Activated CD4-positive, alpha-beta memory T cell treated with anti-CD3 and anti-CD28 coated beads for 36 hours (primary cell): ENCODE measurements at regions of chr10 and their contacts with region 1.

Region 1: DNA sequence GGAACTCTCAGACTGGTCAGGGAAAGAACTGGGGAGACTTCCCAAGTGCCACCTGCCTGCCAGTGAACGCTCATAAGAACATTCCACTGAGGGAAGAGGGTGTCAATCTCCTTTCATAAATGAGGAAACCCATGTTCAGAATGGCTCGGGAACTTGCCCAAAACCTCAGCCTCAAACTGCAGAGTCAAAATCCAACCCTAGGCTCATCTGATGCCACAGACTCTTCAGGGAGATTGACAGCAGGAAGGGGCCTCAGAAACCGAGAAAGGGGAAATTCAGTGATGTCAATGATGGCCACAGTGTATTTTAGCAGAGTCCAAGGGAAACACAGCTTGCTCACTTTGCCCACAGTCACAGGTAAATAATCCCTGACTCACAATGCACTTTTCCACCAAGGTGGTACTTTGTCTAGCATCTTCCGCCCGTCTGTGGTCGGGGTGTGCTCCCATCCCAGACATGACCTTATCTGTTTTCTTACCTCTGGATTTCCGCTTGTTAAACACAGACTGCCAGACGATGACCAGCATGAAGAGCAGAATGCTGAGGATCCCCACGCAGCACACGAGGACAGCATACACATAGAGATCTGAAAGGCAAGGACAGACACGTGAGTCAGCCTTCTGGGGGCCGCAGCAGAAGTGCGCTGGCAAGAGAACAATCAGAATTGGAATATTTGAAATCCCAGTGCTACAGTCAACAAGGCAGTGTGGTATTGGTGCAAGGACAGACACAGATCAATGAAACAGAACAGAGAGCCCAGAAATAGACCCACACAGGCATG is 38.4 kb downstream of the VSTM4 start:
- DNase-seq: peak; percentile 46
- H3K4me3 Mint-ChIP-seq: no peak overlapping the region
- H3K27ac Mint-ChIP-seq: no peak overlapping the region
- H3K4me1 Mint-ChIP-seq: peaks cover 27% of the 10 kb centered on the region
- H3K27me3 Mint-ChIP-seq: peaks cover 8% of the 10 kb centered on the region

Region 2: GRCh38 chr10:49023752-49024151 is 53.2 kb before region 1 on chr10:
- CTCF ChIA-PET with region 1: no interaction called
- POLR2A ChIA-PET with region 1: no interaction called
- intact Hi-C with region 1: no loop called
- DNase-seq: no peak
- H3K4me3 Mint-ChIP-seq: no peak overlapping the region
- H3K27ac Mint-ChIP-seq: no peak overlapping the region
- H3K4me1 Mint-ChIP-seq: no peaks in the 10 kb centered on the region
- H3K27me3 Mint-ChIP-seq: peaks cover 2% of the 10 kb centered on the region

Region 3: DNA sequence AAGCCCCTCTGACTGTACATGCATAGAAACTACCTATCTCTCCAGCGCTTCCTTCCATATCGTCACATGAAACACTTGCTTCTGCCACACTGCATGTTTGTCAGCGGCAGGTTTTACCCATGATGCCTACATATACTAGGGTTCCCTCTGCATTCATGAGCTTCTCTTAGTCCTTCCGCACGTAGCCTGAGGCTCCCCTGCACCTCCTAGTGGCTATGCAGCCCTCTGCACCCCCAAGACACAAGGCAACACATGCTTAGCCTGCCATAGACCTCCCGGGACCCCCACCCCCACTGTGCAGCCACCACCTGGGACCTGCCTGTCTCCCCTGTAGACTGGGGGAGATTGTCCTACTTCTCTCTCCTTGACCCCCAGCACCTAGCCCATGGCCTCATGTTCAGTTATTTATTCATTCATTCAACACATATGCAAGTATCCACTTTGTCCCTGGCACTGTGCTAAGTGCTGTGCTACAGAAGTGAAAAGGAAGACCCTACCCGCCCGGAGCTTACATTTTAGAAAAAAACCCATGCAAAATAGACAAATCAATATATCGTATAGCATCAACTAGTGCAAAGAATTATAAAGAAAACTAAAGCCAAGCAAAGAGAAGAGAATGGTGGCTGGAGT is 87.7 kb after region 1 on chr10:
- CTCF ChIA-PET with region 1: no interaction called
- POLR2A ChIA-PET with region 1: no interaction called
- intact Hi-C with region 1: loop called (anchors 5 kb)
- DNase-seq: peak; percentile 60
- H3K4me3 Mint-ChIP-seq: no peak overlapping the region
- H3K27ac Mint-ChIP-seq: peak overlapping the region; percentile 14
- H3K4me1 Mint-ChIP-seq: peaks cover 41% of the 10 kb centered on the region
- H3K27me3 Mint-ChIP-seq: peaks cover 6% of the 10 kb centered on the region

Region 4: GRCh38 chr10:49254556-49255318 is 177.8 kb after region 1 on chr10:
- CTCF ChIA-PET with region 1: no interaction called
- POLR2A ChIA-PET with region 1: no interaction called
- intact Hi-C with region 1: loop called (anchors 5 kb)
- DNase-seq: peak; percentile 30
- H3K4me3 Mint-ChIP-seq: no peak overlapping the region
- H3K27ac Mint-ChIP-seq: no peak overlapping the region
- H3K4me1 Mint-ChIP-seq: peaks cover 5% of the 10 kb centered on the region
- H3K27me3 Mint-ChIP-seq: no peaks in the 10 kb centered on the region